Head of caudate nucleus (tissue), 42 donors: ENCODE measurements at regions of chr6 and their contacts with region 1.

Region 1: DNA sequence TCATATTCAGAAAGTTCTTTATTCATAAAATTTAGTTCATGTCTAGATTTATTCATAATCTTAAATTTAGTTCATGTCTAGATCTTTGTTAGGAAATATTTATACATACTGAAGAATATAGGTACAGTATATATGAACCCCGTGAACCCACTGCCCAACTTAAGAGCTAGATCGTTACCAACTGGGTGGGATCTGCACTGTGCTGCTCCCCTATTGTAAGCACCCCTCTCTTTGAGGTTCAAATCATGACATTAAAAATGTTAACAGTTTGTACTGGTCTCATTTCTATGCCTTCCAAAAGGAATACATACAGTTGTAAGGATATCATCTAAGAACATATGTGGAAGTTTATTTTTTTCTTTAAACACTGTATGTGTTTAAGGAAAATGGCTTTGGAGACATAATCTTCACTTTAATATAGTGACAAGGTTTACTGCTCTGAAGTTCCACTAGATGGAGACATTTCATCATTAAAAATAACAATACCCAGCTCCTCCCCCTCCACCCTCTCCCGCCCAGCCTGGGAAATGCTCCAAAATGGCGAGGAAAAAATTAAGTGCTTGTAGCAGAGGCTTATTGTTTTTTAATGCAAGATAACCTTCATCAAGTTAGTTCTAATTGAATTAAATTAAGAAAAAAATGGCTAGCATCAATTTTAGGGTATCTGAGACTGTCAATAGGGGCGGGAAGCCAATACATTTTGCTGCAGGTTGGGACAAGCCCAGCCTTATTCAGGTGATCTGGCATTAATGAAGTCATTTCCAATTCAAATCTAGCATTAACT is 104.1 kb upstream of the TRAF3IP2 start:
- DNase-seq: peak; percentile 48 to 89 (median 74)

Region 2: DNA sequence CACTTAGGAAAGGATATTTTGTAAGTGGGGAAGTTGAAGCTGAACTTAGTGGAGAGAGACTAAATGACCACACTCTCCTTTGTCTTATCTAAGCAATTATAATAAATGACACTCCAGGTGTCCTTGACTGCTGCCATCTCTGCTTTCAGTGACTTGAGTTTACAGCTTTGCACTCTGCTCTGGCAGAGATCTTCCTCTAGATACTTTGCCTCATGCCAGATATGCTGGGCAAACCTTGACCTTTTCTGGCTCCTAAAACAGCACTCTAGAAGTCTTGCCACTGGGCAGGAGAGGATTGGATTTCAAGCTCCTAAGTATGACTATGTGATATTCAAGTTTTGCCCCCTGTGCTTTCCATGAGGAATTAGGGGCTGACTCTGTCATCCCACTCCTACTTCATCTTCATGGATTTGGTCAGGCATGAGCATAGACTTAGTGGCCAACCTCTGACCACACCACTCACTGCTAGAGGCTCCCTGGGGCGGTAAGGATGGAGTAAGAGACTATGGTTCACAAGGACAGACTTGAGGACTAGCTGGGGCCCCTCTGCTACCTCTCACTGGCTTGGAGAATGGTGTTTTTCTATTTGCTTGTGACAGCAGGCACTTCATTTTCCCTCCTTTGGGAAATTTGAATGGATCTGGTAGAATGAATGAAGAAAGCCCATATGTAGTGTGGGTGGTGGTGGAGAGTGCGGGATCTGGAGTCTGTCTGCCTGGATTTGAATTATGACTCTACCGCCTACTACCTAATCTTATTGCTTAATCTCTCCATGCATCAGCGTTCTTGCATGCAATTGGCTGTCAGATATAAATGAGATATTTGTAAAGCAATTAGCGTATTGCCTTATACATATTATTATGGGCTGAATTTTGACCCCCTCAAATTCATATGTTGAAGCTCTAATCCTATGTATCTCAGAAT is 418.2 kb before region 1 on chr6:
- intact Hi-C with region 1: no loop called
- DNase-seq: peak in 10 of 42 donors; percentile 15 to 50 (median 26)

Region 3: DNA sequence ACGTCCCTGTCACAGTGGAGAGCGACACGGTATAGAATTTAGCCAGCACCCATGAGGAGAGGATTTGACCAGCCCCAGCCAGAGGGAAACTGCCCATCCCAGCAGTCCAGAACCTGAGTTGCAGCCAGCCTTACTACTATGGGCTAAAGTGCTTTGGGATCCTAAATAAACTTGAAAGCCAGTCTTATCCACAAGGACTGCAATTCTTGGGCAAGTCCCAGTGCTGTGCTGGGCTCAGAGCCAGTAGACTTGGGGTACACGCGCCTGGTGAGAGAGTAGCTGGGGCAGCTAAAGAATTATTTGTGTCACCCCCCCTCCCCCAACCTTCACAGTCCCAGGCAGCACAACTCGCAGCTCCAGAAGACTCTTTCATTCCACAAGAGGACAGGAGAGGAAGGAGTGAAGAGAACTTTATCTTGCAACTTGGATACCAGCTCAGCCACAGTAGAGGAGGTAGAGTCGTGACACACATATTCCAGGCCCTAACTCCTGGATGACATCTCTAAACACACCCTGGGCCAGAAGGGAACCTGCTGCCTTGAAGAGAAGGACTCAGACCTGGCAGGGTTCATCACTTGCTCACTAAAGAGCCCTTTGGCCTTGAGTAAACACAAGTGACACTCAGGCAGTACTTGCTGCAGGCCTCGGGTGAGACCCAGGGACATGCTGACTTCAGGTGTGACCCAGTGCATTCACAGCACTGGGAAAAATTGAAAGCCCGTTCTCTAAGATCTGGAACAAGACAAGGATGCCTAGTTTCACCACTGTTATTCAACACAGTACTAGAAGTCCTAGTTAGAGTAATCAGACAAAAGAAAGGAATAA is 327.1 kb before region 1 on chr6:
- intact Hi-C with region 1: no loop called
- DNase-seq: peak in 35 of 42 donors; percentile 10 to 71 (median 32)

Region 4: GRCh38 chr6:111873178-111874024 is 163.6 kb after region 1 on chr6 and contains the start of gene FYN:
- intact Hi-C with region 1: loop called (anchors 5 kb)
- DNase-seq: peak; percentile 98 to 100 (median 99)

Region 5: DNA sequence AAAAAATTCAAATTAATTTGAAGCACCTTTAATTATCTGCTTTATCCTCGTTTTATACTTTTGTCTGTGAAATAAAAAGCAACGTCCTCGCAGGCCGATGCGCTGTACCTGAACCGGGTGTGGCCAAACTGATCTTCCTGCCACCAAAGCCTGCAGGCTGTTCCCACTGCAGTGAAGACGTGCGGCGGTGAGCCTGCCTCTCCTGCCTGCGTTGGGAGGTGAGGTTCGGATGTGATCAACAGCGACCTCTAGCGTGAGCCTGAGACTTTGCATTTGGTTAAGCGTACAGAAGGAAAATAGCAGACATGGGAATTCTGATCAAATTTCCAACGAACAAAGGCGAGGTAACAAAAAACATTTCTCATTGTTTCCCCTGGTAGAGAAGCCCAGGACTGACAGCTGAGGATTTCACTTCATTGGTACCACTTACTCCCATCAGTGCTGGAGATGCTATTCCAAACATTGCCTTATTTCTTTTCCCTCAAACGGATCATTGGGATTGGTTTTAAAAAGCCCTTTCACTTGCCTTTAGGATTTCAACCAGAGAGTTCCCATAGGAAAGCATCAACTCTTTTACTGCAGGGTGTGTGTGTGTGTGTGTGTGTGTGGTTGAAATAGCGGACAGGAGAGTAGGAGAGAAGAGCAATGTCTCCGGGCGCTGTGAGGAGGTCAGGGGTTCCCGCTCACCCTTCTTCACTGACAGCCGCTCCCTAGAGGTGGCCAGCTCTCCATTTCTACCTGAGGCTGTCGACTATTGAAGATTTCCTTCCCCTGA is 287.5 kb after region 1 on chr6:
- intact Hi-C with region 1: loop called (anchors 2 kb)
- DNase-seq: peak; percentile 65 to 93 (median 84)

Region 6: DNA sequence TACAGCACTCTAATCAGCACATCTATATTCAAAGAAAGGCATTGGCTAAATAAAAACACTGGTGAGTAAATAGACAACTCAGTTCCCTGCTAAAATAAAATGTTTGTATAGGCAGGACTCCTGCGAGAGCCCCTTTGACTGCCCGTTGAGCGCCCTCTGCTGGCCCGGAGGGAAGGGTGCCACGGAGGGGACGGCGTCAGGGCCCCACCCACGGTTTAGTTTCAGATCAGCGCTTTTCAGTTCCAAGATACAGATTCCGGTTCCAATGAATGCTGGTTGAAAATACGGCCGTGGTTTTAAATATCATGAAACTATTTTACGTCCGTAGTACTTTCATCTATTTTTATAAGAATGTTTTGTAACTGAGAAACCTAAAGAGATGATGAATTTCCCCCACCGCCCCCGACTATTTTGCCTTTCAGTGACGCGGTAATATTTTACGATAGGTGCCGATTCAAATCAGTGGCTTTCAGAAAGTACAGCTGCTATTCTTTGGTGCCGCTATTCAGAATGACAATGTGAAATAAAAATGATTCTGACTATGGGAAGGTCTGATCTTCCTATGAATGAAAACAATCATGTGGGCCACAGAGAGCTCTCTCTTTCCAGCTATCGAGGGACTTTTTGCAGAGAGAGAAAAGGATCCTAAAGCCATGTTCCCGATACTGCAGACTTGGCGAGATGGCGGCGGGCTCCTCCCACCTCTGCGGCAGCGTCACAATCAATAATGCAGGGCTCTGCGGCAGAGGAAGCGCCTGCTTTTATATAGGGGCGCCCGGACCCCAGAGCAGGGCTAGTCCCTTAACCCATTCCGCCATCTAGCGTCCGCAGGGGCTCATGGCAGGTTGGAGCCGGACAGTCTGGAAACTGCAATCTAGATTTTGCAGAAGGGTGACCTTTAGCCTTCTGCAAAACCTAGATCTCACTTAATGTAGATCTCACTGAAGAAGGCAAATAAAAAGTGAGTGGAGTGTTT is 333.5 kb after region 1 on chr6:
- intact Hi-C with region 1: loop called (anchors 5 kb)
- DNase-seq: peak; percentile 86 to 97 (median 93)